ENCODE measurements at regions of chr15 and their contacts with region 1.

Region 1: DNA sequence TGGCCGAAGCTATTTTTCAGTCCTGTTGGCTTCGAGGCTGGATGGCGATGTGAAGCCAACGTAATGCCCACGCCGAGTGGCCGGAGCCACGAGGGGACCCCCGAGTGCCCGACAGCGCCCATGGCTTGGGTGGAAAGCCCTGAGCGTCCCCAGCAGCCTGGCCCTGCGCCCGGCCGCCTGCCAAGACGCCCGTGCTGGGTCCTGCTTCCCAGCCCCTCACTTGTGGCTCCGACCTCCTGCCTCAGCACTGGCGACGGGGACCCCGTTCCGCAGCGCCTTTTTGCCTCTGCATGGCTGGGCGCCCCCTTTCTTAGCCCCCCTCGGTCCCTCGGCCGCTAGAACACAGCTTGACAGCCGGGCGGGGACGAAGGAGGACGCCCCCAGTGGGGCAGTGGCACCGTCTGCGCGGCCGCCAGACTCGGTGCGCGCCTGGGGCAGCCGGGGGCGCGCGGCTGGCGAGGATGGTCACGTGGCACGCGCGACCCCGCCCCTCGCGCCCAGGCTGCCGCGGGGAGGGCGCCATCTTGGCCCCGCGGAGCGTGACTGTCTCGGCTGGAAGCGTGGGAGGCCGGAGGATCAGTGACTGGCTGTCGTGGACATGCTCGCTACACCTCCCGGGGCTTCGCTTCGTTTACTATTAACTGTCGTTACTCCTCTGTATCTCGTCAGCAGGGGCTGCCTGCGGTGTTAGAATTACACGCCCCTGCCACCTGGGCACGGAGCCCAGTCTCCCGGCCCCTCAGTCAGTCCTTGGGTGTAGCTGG is 626 bp upstream of the GPR176 start:
- DNase-seq: peak; percentile 57 to 87 (median 76)
- ATAC-seq: peak; percentile 90
- H3K4me3 ChIP-seq: peak overlapping the region; percentile 69 to 72
- H3K4me3 Mint-ChIP-seq: peak overlapping the region; percentile 87
- H3K27ac ChIP-seq: peak overlapping the region in 1 of 2 experiments; percentile 23
- H3K27ac Mint-ChIP-seq: peak overlapping the region; percentile 41
- H3K4me1 ChIP-seq: peaks cover 19% of the 10 kb centered on the region
- H3K4me1 Mint-ChIP-seq: peaks cover 13% of the 10 kb centered on the region
- H3K27me3 ChIP-seq: peaks cover 7 to 22% of the 10 kb centered on the region in 2 experiments
- H3K27me3 Mint-ChIP-seq: peaks cover 19% of the 10 kb centered on the region
- CTCF ChIP-seq: no peak

Region 2: DNA sequence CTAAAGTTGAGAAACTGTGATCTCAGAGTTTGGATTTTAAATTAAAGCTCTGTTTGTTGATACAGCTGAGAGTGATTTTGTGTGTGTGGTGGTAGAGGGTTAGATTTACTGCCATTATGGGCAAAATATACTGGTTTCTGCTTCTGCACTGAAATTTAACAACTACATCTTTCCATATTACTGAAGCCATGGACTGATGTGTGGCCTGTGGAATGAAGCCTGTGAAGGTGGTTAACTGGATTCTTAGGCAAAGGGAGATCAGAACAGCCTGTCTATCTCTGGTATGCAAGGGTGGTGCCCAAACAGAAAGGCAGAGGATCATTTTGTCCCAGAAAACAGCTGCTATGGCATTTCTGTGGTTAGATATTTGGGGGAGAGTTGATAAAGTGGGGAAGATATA is 637.2 kb before region 1 on chr15:
- CTCF ChIA-PET with region 1: no interaction called
- POLR2A ChIA-PET with region 1: no interaction called
- intact Hi-C with region 1: no loop called
- DNase-seq: no peak
- ATAC-seq: no peak
- H3K4me3 ChIP-seq: no peak overlapping the region
- H3K4me3 Mint-ChIP-seq: no peak overlapping the region
- H3K27ac ChIP-seq: no peak overlapping the region
- H3K27ac Mint-ChIP-seq: no peak overlapping the region
- H3K4me1 ChIP-seq: no peaks in the 10 kb centered on the region
- H3K4me1 Mint-ChIP-seq: no peaks in the 10 kb centered on the region
- H3K27me3 ChIP-seq: no peaks in the 10 kb centered on the region
- H3K27me3 Mint-ChIP-seq: peaks cover 15% of the 10 kb centered on the region
- CTCF ChIP-seq: no peak

Region 3: DNA sequence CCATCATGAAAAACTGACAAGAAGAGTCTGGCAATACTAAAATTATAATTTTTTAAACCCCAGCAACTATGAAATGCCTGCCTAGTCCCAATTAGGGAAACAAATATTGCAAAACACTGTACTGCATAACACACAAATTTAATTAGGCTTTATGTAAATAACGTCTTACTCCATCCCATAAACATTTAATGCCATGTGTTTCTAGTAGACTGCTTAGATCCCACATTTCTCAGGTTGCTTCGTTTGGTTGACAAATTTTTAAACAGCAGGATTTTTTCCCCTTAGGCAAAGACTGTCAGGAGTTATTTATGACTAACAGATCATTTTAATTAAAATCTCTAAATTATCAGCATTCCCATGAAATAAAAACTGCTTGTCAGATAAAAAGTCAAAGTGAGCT is 43.1 kb after region 1 on chr15:
- CTCF ChIA-PET with region 1: no interaction called
- POLR2A ChIA-PET with region 1: no interaction called
- intact Hi-C with region 1: no loop called
- DNase-seq: no peak
- ATAC-seq: no peak
- H3K4me3 ChIP-seq: no peak overlapping the region
- H3K4me3 Mint-ChIP-seq: no peak overlapping the region
- H3K27ac ChIP-seq: no peak overlapping the region
- H3K27ac Mint-ChIP-seq: no peak overlapping the region
- H3K4me1 ChIP-seq: no peaks in the 10 kb centered on the region
- H3K4me1 Mint-ChIP-seq: no peaks in the 10 kb centered on the region
- H3K27me3 ChIP-seq: no peaks in the 10 kb centered on the region
- H3K27me3 Mint-ChIP-seq: no peaks in the 10 kb centered on the region
- CTCF ChIP-seq: no peak

Region 4: GRCh38 chr15:40029979-40030893 is 109.5 kb after region 1 on chr15:
- CTCF ChIA-PET with region 1: no interaction called
- POLR2A ChIA-PET with region 1: no interaction called
- intact Hi-C with region 1: loop called in 1 of 2 experiments (anchors 5 kb)
- DNase-seq: peak in 1 of 9 experiments; percentile 32
- ATAC-seq: no peak
- H3K4me3 ChIP-seq: no peak overlapping the region
- H3K4me3 Mint-ChIP-seq: no peak overlapping the region
- H3K27ac ChIP-seq: no peak overlapping the region
- H3K27ac Mint-ChIP-seq: no peak overlapping the region
- H3K4me1 ChIP-seq: no peaks in the 10 kb centered on the region
- H3K4me1 Mint-ChIP-seq: peaks cover 9% of the 10 kb centered on the region
- H3K27me3 ChIP-seq: no peaks in the 10 kb centered on the region
- H3K27me3 Mint-ChIP-seq: no peaks in the 10 kb centered on the region
- CTCF ChIP-seq: peak; percentile 50

Measured in CD8-positive, alpha-beta T cell (primary cell).